ENCODE measurements at regions of chr22 and their contacts with region 1.

Region 1: GRCh38 chr22:41367039-41367679 is 14.6 kb upstream of the TEF start:
- DNase-seq: peak; percentile 98 to 100 (median 98)

Region 2: GRCh38 chr22:41301105-41302020 is 65.8 kb before region 1 on chr22 and contains the start of gene ZC3H7B:
- intact Hi-C with region 1: loop called (anchors 10 kb)
- DNase-seq: peak; percentile 67 to 98 (median 82)

Region 3: DNA sequence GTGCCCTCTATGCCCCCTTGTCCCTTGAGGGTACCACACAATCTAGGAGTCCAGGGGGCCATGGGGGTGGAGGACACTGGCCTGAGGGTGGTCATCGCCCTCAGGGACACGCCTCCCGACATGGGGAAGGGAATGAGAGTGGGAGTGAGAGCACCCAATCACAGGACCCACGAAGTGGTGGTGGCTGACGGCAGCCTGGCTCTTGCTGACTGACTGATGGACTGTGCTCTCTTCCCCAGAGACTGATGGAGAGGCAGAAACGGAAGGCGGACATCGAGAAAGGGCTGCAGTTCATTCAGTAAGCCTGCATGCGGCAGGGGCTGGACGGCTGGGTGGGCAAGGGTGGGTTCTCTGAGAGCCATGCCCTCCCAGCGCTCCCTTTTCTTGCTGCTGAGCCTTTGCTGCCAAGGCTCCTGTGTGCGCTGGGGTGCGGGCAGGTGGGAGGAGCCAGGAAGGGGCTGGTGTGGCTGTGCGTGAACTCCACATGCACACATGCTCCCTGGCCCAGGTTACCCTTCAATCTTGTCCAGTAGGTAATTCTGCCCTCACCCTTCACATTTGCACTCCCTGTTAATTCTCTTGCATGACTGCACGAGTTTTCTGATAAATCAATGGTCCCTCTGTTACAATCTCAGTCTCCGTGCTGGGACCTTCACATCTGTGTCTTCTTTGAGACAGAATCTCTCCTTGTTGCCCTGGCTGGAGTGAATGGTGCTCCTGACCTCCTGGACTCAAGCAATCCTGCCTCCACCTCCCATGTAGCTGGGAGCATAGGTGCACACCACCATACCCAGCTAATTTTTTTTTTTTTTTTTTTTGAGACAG is 46.5 kb before region 1 on chr22:
- intact Hi-C with region 1: no loop called
- DNase-seq: no peak

Measured in posterior cingulate gyrus (tissue), 11 donors.